Activated CD4-positive, alpha-beta memory T cell treated with anti-CD3 and anti-CD28 coated beads for 36 hours (primary cell): ENCODE measurements at regions of chr5 and their contacts with region 1.

Region 1: GRCh38 chr5:149434162-149435014 is 55.3 kb upstream of the IL17B start:
- DNase-seq: peak; percentile 66
- H3K4me3 Mint-ChIP-seq: no peak overlapping the region
- H3K27ac Mint-ChIP-seq: no peak overlapping the region
- H3K4me1 Mint-ChIP-seq: peaks cover 12% of the 10 kb centered on the region
- H3K27me3 Mint-ChIP-seq: no peaks in the 10 kb centered on the region

Region 2: GRCh38 chr5:149228618-149229297 is 205.6 kb before region 1 on chr5:
- CTCF ChIA-PET with region 1: no interaction called
- POLR2A ChIA-PET with region 1: no interaction called
- intact Hi-C with region 1: no loop called
- DNase-seq: no peak
- H3K4me3 Mint-ChIP-seq: no peak overlapping the region
- H3K27ac Mint-ChIP-seq: no peak overlapping the region
- H3K4me1 Mint-ChIP-seq: no peaks in the 10 kb centered on the region
- H3K27me3 Mint-ChIP-seq: peaks cover 2% of the 10 kb centered on the region

Region 3: GRCh38 chr5:149317281-149318048 is 116.9 kb before region 1 on chr5:
- CTCF ChIA-PET with region 1: interaction called, 51 read pairs
- POLR2A ChIA-PET with region 1: no interaction called
- intact Hi-C with region 1: loop called (anchors 2 kb)
- DNase-seq: peak; percentile 50
- H3K4me3 Mint-ChIP-seq: no peak overlapping the region
- H3K27ac Mint-ChIP-seq: no peak overlapping the region
- H3K4me1 Mint-ChIP-seq: peaks cover 1% of the 10 kb centered on the region
- H3K27me3 Mint-ChIP-seq: no peaks in the 10 kb centered on the region

Region 4: DNA sequence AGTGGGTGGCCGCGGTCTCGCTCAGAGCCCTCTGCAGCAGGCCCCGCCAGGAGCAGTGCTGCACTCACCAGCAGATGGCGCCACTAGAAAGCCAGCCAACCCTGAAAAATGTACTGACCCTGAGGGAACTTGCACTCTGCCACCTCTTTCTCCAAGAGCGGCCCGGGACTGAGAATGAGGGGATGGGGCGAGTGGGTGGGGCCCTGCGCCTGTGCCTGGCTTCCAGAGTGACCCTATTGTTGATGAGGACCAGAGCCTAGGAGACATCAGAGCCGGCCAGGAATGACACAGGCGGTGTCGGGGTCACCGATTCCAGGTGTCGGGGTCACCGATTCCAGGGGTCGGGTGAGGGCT is 52.4 kb before region 1 on chr5:
- CTCF ChIA-PET with region 1: interaction called, 57 read pairs
- POLR2A ChIA-PET with region 1: no interaction called
- intact Hi-C with region 1: loop called (anchors 1 kb)
- DNase-seq: peak; percentile 82
- H3K4me3 Mint-ChIP-seq: no peak overlapping the region
- H3K27ac Mint-ChIP-seq: no peak overlapping the region
- H3K4me1 Mint-ChIP-seq: no peaks in the 10 kb centered on the region
- H3K27me3 Mint-ChIP-seq: peaks cover 1% of the 10 kb centered on the region

Region 5: GRCh38 chr5:149422366-149423048 is 11.9 kb before region 1 on chr5:
- CTCF ChIA-PET with region 1: interaction called, 17 read pairs
- POLR2A ChIA-PET with region 1: no interaction called
- intact Hi-C with region 1: no loop called
- DNase-seq: no peak
- H3K4me3 Mint-ChIP-seq: no peak overlapping the region
- H3K27ac Mint-ChIP-seq: no peak overlapping the region
- H3K4me1 Mint-ChIP-seq: no peaks in the 10 kb centered on the region
- H3K27me3 Mint-ChIP-seq: peaks cover 2% of the 10 kb centered on the region

Region 6: GRCh38 chr5:149448831-149449714 is 14.7 kb after region 1 on chr5:
- CTCF ChIA-PET with region 1: interaction called, 39 read pairs
- POLR2A ChIA-PET with region 1: no interaction called
- intact Hi-C with region 1: no loop called
- DNase-seq: no peak
- H3K4me3 Mint-ChIP-seq: no peak overlapping the region
- H3K27ac Mint-ChIP-seq: no peak overlapping the region
- H3K4me1 Mint-ChIP-seq: no peaks in the 10 kb centered on the region
- H3K27me3 Mint-ChIP-seq: no peaks in the 10 kb centered on the region